ENCODE measurements at regions of chr6 and their contacts with region 1.

Region 1: GRCh38 chr6:27672113-27672799 is 199.4 kb upstream of the ZNF184 start:
- DNase-seq: peak; percentile 72
- H3K4me3 Mint-ChIP-seq: peak overlapping the region; percentile 44
- H3K27ac Mint-ChIP-seq: peak overlapping the region; percentile 66
- H3K4me1 Mint-ChIP-seq: peaks cover 34% of the 10 kb centered on the region
- H3K27me3 Mint-ChIP-seq: peaks cover 74% of the 10 kb centered on the region

Region 2: GRCh38 chr6:27177485-27178406 is 494.5 kb before region 1 on chr6:
- CTCF ChIA-PET with region 1: no interaction called
- intact Hi-C with region 1: loop called (anchors 5 kb)
- DNase-seq: peak; percentile 83
- H3K4me3 Mint-ChIP-seq: peak overlapping the region; percentile 92
- H3K27ac Mint-ChIP-seq: peak overlapping the region; percentile 87
- H3K4me1 Mint-ChIP-seq: peaks cover 4% of the 10 kb centered on the region
- H3K27me3 Mint-ChIP-seq: peaks cover 6% of the 10 kb centered on the region

Region 3: GRCh38 chr6:27280064-27280539 is 392.2 kb before region 1 on chr6:
- CTCF ChIA-PET with region 1: no interaction called
- intact Hi-C with region 1: loop called (anchors 5 kb)
- DNase-seq: peak; percentile 43
- H3K4me3 Mint-ChIP-seq: peak overlapping the region; percentile 63
- H3K27ac Mint-ChIP-seq: peak overlapping the region; percentile 36
- H3K4me1 Mint-ChIP-seq: peaks cover 4% of the 10 kb centered on the region
- H3K27me3 Mint-ChIP-seq: peaks cover 70% of the 10 kb centered on the region

Region 4: GRCh38 chr6:27545271-27546046 is 126.8 kb before region 1 on chr6:
- CTCF ChIA-PET with region 1: no interaction called
- intact Hi-C with region 1: loop called (anchors 5 kb)
- DNase-seq: peak; percentile 71
- H3K4me3 Mint-ChIP-seq: peak overlapping the region; percentile 67
- H3K27ac Mint-ChIP-seq: no peak overlapping the region
- H3K4me1 Mint-ChIP-seq: peaks cover 16% of the 10 kb centered on the region
- H3K27me3 Mint-ChIP-seq: peaks cover 81% of the 10 kb centered on the region

Region 5: GRCh38 chr6:27592481-27593199 is 79.6 kb before region 1 on chr6:
- CTCF ChIA-PET with region 1: no interaction called
- intact Hi-C with region 1: loop called (anchors 5 kb)
- DNase-seq: peak; percentile 71
- H3K4me3 Mint-ChIP-seq: no peak overlapping the region
- H3K27ac Mint-ChIP-seq: no peak overlapping the region
- H3K4me1 Mint-ChIP-seq: no peaks in the 10 kb centered on the region
- H3K27me3 Mint-ChIP-seq: peaks cover 26% of the 10 kb centered on the region